Left cardiac atrium (tissue), 4 donors: ENCODE measurements at regions of chrX and their contacts with region 1.

Region 1: DNA sequence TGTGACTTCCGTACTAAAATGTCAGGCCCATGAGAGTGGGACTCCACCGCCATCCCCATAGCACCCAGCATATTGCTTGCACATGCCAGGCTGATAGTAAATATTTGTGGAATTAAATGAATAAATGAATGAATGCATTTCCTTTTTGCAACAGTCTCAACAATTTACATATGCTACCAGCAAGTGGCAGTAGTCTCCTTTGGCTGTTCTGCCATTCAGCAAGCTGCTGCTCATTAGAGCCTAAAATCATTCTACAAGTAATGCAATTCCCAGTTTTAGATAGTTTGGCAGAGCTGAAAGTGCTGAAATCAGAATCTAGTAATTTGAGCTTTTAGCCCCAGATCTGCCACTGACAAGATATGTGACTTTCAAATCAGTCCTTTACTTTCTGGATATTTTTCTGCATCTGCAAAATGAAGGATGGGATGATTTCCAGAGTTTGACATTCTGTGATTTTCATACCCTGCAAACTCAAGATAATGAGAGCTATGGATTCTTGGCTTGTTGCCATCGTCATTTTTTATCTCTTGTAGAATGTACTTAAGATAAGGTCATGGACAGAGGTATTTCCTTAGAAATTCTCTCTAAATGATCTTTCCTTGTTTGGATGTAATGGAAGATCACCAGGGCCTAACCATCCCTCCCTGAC is 35.7 kb upstream of the INTS6L start:
- DNase-seq: no peak
- ATAC-seq: peak; percentile 37 to 47

Region 2: DNA sequence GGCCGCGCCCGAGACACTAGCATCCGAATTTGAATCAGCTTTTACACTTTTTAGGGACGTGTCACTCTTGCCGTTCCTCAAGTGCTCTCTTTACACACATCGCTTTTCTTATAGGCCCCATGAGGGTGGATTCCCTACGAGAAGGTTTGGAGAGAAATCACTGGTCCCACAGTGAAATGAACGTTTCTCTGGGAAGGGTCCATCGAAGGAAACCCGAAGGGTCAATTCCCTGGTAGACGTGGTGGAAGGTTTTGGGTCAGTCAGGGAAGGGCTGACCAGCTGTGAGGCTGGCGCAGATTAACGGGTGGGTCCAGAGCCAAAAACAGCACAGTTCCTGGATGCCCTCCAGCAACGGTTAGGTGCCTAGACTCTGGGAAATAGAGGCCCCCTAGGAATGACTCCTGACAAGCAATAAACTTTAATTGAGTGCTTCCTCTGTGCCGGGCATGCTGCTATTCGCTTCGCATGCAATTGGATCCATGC is 139.6 kb before region 1 on chrX:
- intact Hi-C with region 1: no loop called
- DNase-seq: peak; percentile 55
- ATAC-seq: peak; percentile 25 to 58

Region 3: DNA sequence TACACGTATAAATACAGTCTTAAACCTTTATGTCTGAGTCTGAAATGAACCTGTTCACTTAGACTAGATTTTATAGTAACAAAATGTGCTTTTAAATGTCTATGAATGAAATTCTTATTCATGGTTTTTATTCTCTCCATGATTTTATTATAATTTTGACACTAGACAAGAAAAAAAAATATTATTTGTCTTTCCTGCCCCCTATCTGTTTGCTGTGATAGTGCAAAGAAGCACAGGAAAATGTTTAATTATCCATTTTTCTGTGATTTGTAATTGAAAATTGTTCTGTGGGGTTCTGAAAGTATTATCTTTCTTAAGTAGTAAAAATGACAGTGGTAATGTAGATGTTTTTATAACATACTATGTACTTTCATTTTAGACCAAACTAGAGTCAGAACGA is 87.7 kb after region 1 on chrX:
- intact Hi-C with region 1: loop called (anchors 5 to 10 kb)
- DNase-seq: no peak
- ATAC-seq: no peak

Region 4: GRCh38 chrX:135596495-135596894 is 111.7 kb after region 1 on chrX:
- intact Hi-C with region 1: loop called in 1 of 2 experiments (anchors 2 kb)
- DNase-seq: no peak
- ATAC-seq: peak; percentile 36 to 50

Region 5: GRCh38 chrX:135707880-135708279 is 223.1 kb after region 1 on chrX:
- intact Hi-C with region 1: no loop called
- DNase-seq: no peak
- ATAC-seq: no peak

Region 6: GRCh38 chrX:135931644-135932487 is 447.1 kb after region 1 on chrX:
- intact Hi-C with region 1: loop called in 1 of 2 experiments (anchors 5 kb)
- DNase-seq: peak; percentile 49
- ATAC-seq: no peak